Activated T-helper 1 cell treated with anti-CD3 and anti-CD28 coated beads, Interleukin-12 subunit alpha, Interleukin-12 subunit beta, Interleukin-2, Interleukin-4 antibody, amounts not matched to agents 30 ng/mL and 10 ng/mL and 1 ng/mL, durations not matched to agents 14 hours and 24 hours and 36 hours (primary cell): ENCODE measurements at regions of chr2 and their contacts with region 1.

Region 1: GRCh38 chr2:86195055-86195807 is at the start of gene IMMT:
- DNase-seq: peak; percentile 93
- H3K4me3 Mint-ChIP-seq: peak within 1 kb of the TSS; percentile 99
- H3K27ac Mint-ChIP-seq: peak within 1 kb of the TSS; percentile 93
- H3K4me1 Mint-ChIP-seq: peaks cover 45% of the 10 kb centered on the region
- H3K27me3 Mint-ChIP-seq: no peaks in the 10 kb centered on the region
- total RNA-seq, gene IMMT: 164 and 166 TPM in 2 replicates

Region 2: DNA sequence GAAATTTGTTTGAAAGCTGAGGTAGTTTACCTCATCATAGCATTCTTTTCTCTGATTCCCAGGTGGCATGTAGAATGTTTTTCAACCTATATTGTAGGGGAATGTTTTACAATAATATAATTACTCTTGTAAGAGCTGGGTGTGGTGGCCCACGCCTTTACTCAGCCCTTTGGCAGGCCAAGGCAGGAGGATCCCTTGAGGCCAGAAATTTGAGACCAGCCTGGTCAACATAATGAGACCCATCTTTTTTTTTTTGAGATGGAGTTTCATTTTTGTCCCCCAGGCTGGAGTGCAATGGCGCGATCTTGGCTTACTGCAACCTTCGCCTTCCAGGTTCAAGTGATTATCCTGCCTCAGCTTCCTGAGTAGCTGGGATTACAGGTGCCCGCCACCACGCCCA is 575.6 kb before region 1 on chr2:
- intact Hi-C with region 1: loop called (anchors 5 kb)
- DNase-seq: no peak
- H3K4me3 Mint-ChIP-seq: no peak overlapping the region
- H3K27ac Mint-ChIP-seq: no peak overlapping the region
- H3K4me1 Mint-ChIP-seq: peaks cover 14% of the 10 kb centered on the region
- H3K27me3 Mint-ChIP-seq: no peaks in the 10 kb centered on the region

Region 3: DNA sequence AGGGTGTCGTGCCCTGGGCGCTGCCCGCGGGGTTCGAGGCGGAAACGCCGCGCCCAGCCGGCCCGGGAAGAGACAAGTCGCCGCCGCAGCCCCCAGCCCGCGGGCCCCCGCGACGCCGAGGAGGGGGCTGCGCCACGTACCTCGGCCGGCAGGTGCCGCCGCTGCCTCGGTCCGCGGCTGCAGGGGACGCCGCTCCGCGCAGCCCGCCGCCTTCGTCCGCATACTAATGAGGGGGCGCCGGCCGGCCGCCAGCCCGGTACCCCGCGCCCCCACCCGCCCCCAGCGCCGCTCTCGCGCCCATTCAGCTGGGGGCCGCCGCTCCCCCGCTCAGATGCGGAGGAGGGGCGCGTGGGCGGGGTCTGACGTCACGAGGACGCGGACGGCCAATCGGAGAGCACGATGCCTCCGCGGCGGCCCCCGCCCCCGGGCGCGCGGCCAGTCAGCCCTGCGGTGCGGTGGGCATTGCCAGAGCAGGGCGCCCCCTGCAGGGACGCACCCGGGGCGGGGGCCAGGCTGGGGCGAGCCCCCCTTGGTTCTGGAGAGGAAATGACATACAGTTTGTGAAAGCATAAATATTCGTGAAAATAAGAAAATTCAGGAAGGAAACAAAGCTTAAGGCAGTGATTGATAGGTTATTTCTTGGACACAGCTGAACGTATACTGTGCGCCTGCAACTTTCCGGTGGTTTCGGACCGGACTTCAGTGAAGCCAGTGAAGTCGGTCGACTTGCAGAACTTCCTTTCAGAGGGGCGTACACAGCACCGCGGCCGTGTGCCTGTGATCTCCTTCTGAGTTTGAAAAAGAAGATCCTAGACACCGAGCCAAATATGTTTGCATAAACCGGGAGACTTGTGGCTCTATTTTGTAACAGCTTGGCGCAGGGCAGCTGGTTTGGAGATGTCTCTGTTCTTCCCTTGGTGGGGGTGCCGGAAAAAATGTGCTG is 306.3 kb before region 1 on chr2 and contains the start of gene ST3GAL5:
- intact Hi-C with region 1: loop called (anchors 10 kb)
- DNase-seq: peak; percentile 90
- H3K4me3 Mint-ChIP-seq: peak within 1 kb of the TSS; percentile 88
- H3K27ac Mint-ChIP-seq: peak within 1 kb of the TSS; percentile 87
- H3K4me1 Mint-ChIP-seq: peaks cover 73% of the 10 kb centered on the region
- H3K27me3 Mint-ChIP-seq: no peaks in the 10 kb centered on the region
- total RNA-seq, gene ST3GAL5: 17.4 and 18.9 TPM in 2 replicates

Region 4: DNA sequence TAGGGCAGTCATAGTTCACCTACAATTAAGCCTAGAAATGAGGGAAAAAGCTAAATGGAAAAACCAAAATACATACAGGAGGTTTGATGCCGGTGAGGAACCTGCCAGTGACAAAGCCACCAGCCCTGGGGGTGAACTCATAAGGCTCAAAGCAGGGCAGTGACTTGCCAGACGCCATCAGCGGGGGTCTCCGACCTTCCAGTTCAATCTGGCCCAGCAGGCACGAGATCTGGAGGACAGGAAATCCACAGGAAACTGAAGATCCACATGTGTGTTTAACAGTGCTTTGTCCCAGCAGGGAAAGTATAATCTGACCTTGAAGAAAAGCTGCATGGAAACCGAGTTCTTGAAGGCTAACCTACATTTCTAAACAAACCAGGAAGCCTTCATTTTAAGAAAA is 149.7 kb before region 1 on chr2:
- intact Hi-C with region 1: no loop called
- DNase-seq: no peak
- H3K4me3 Mint-ChIP-seq: no peak overlapping the region
- H3K27ac Mint-ChIP-seq: no peak overlapping the region
- H3K4me1 Mint-ChIP-seq: peaks cover 9% of the 10 kb centered on the region
- H3K27me3 Mint-ChIP-seq: no peaks in the 10 kb centered on the region

Region 5: GRCh38 chr2:86274918-86275275 is 79.7 kb after region 1 on chr2:
- intact Hi-C with region 1: loop called (anchors 2 kb)
- DNase-seq: no peak
- H3K4me3 Mint-ChIP-seq: no peak overlapping the region
- H3K27ac Mint-ChIP-seq: no peak overlapping the region
- H3K4me1 Mint-ChIP-seq: peaks cover 28% of the 10 kb centered on the region
- H3K27me3 Mint-ChIP-seq: no peaks in the 10 kb centered on the region

Region 6: GRCh38 chr2:86562922-86563649 is 367.9 kb after region 1 on chr2 and contains the start of gene CHMP3:
- intact Hi-C with region 1: loop called (anchors 1 kb)
- DNase-seq: peak; percentile 96
- H3K4me3 Mint-ChIP-seq: peak within 1 kb of the TSS; percentile 97
- H3K27ac Mint-ChIP-seq: peak within 1 kb of the TSS; percentile 98
- H3K4me1 Mint-ChIP-seq: peaks cover 46% of the 10 kb centered on the region
- H3K27me3 Mint-ChIP-seq: no peaks in the 10 kb centered on the region
- total RNA-seq, gene CHMP3: 27.7 and 27.9 TPM in 2 replicates